Endothelial cell of umbilical vein (primary cell): ENCODE measurements at regions of chr10 and their contacts with region 1.

Region 1: GRCh38 chr10:43105102-43105785 is 28.4 kb downstream of the RET start:
- DNase-seq: peak; percentile 62
- H3K4me3 ChIP-seq: peak overlapping the region in 2 of 3 experiments; percentile 35 to 38
- H3K27ac ChIP-seq: no peak overlapping the region
- H3K4me1 ChIP-seq: peaks cover 9% of the 10 kb centered on the region
- H3K27me3 ChIP-seq: peaks cover 1 to 8% of the 10 kb centered on the region in 2 experiments
- CTCF ChIP-seq: peak; percentile 96 to 99
- POLR2A ChIP-seq: no peak

Region 2: GRCh38 chr10:42552493-42553407 is 552.5 kb before region 1 on chr10:
- CTCF ChIA-PET with region 1: no interaction called
- POLR2A ChIA-PET with region 1: no interaction called
- dilution Hi-C with region 1: no loop called
- intact Hi-C with region 1: loop called (anchors 1 kb)
- DNase-seq: peak; percentile 98
- H3K4me3 ChIP-seq: peak overlapping the region; percentile 67 to 71 (median 71)
- H3K27ac ChIP-seq: no peak overlapping the region
- H3K4me1 ChIP-seq: peaks cover 5% of the 10 kb centered on the region
- H3K27me3 ChIP-seq: no peaks in the 10 kb centered on the region
- CTCF ChIP-seq: no peak
- POLR2A ChIP-seq: peak; percentile 63

Region 3: DNA sequence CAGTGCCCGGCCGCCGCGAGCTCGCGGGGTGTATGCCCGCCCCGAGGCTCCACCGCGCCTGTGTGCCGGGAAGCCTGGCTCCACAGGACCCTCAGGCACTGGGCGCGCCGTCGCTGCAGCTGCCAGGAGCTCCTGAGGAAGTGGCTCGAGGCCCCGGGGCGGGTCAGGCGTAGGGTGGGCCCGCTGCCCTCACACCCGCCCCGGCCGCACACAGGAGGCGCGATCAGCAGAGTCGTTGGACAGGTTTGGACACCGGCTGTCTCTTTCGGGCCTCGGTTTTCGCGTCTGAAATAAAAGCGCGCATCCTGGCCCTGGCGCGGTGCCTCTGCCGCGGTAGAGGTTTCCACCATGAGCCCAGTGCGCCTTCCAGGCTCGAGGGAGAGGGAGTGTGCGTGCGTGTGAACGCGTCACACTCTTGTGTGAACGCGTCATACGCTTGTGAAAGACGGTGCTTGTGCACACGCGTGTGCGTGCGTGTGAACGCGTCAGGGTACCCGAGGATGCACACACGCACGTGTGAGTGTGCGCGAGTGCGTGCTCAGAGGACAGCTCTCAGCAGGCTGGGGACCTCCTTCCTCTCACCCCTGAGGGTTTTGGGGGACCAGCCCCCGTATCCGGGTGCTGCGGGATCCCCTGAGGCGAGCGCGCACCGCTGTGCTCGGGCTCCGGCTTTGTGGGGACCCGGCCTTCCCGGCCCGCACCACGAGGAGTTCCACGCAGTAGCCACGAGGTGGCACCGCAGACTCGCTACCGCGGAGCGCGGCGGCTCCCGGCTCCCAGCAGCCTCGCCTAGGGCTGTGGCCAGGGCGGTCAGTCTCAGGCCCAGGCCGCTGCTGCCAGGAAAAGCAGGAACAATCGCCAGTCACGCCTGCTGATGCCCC is 238.9 kb before region 1 on chr10:
- CTCF ChIA-PET with region 1: interaction called, 25 read pairs
- POLR2A ChIA-PET with region 1: no interaction called
- dilution Hi-C with region 1: no loop called
- intact Hi-C with region 1: loop called (anchors 1 kb)
- DNase-seq: peak; percentile 65
- H3K4me3 ChIP-seq: no peak overlapping the region
- H3K27ac ChIP-seq: no peak overlapping the region
- H3K4me1 ChIP-seq: peaks cover 2% of the 10 kb centered on the region
- H3K27me3 ChIP-seq: peaks cover 6 to 21% of the 10 kb centered on the region in 2 experiments
- CTCF ChIP-seq: peak; percentile 52 to 87
- POLR2A ChIP-seq: no peak

Region 4: GRCh38 chr10:43055991-43056567 is 49.2 kb before region 1 on chr10:
- CTCF ChIA-PET with region 1: no interaction called
- POLR2A ChIA-PET with region 1: no interaction called
- dilution Hi-C with region 1: no loop called
- intact Hi-C with region 1: no loop called
- DNase-seq: no peak
- H3K4me3 ChIP-seq: no peak overlapping the region
- H3K27ac ChIP-seq: no peak overlapping the region
- H3K4me1 ChIP-seq: no peaks in the 10 kb centered on the region
- H3K27me3 ChIP-seq: no peaks in the 10 kb centered on the region
- CTCF ChIP-seq: no peak
- POLR2A ChIP-seq: no peak

Region 5: DNA sequence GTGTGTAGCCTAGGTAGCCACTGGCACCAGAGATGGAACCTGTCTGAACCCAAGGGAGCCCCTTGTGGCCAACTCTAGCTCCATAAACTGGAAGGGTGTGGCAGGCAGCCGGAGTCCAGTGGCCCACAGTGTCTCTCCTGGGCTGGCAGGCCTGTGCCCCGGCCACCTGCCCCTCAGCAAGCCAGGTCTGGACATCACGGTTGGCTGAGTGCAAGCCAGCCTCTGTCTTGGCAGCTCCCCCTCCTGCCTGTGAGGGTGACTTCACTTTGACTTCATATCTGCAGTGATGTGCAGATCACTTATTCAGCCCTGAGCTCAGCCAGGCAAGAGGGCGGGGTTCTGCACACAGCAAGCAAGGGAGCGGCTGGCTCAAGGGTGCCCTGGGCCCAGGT is 29.6 kb before region 1 on chr10:
- CTCF ChIA-PET with region 1: no interaction called
- POLR2A ChIA-PET with region 1: no interaction called
- dilution Hi-C with region 1: no loop called
- intact Hi-C with region 1: no loop called
- DNase-seq: no peak
- H3K4me3 ChIP-seq: no peak overlapping the region
- H3K27ac ChIP-seq: no peak overlapping the region
- H3K4me1 ChIP-seq: peaks cover 2% of the 10 kb centered on the region
- H3K27me3 ChIP-seq: peaks cover 17% of the 10 kb centered on the region in 2 experiments
- CTCF ChIP-seq: no peak
- POLR2A ChIP-seq: no peak

Region 6: GRCh38 chr10:43090188-43090587 is 15.1 kb before region 1 on chr10:
- CTCF ChIA-PET with region 1: no interaction called
- POLR2A ChIA-PET with region 1: no interaction called
- dilution Hi-C with region 1: no loop called
- intact Hi-C with region 1: no loop called
- DNase-seq: no peak
- H3K4me3 ChIP-seq: no peak overlapping the region
- H3K27ac ChIP-seq: no peak overlapping the region
- H3K4me1 ChIP-seq: no peaks in the 10 kb centered on the region
- H3K27me3 ChIP-seq: no peaks in the 10 kb centered on the region
- CTCF ChIP-seq: no peak
- POLR2A ChIP-seq: no peak

Region 7: GRCh38 chr10:43138021-43138756 is 32.9 kb after region 1 on chr10 and contains the start of gene CSGALNACT2:
- CTCF ChIA-PET with region 1: no interaction called
- POLR2A ChIA-PET with region 1: no interaction called
- dilution Hi-C with region 1: no loop called
- intact Hi-C with region 1: loop called (anchors 2 kb)
- DNase-seq: peak; percentile 76
- H3K4me3 ChIP-seq: peak within 1 kb of the TSS; percentile 75 to 98 (median 92)
- H3K27ac ChIP-seq: peak within 1 kb of the TSS; percentile 81
- H3K4me1 ChIP-seq: peaks cover 24% of the 10 kb centered on the region
- H3K27me3 ChIP-seq: peaks cover 2 to 6% of the 10 kb centered on the region in 2 experiments
- CTCF ChIP-seq: no peak
- POLR2A ChIP-seq: peak; percentile 80
- total RNA-seq, gene CSGALNACT2: 17.7 and 19.9 TPM in 2 replicates

Region 8: DNA sequence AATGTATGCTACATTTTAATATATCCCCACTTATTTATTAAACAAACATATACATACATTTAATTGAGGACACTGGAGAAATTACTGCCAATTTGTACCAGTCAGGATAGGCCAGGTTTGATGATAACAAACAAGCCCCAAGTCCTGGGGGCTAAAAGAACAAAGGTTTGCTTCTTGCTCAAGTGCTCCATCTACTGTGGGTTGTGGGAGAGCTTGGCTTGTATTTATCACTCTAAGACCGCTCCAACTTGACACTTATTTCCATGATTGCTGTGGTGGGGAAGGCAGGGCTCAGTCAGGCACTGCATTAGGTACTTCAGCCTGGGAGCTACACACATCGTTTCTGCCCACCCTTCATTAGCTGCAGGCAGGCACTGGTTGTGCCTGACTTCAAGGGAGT is 680.0 kb after region 1 on chr10:
- CTCF ChIA-PET with region 1: no interaction called
- POLR2A ChIA-PET with region 1: no interaction called
- dilution Hi-C with region 1: no loop called
- intact Hi-C with region 1: no loop called
- DNase-seq: peak; percentile 21
- H3K4me3 ChIP-seq: no peak overlapping the region
- H3K27ac ChIP-seq: no peak overlapping the region
- H3K4me1 ChIP-seq: no peaks in the 10 kb centered on the region
- H3K27me3 ChIP-seq: peaks cover 0 to 3% of the 10 kb centered on the region in 2 experiments
- CTCF ChIP-seq: no peak
- POLR2A ChIP-seq: no peak